Right cardiac atrium (tissue), 5 donors: ENCODE measurements at regions of chr5 and their contacts with region 1.

Region 1: DNA sequence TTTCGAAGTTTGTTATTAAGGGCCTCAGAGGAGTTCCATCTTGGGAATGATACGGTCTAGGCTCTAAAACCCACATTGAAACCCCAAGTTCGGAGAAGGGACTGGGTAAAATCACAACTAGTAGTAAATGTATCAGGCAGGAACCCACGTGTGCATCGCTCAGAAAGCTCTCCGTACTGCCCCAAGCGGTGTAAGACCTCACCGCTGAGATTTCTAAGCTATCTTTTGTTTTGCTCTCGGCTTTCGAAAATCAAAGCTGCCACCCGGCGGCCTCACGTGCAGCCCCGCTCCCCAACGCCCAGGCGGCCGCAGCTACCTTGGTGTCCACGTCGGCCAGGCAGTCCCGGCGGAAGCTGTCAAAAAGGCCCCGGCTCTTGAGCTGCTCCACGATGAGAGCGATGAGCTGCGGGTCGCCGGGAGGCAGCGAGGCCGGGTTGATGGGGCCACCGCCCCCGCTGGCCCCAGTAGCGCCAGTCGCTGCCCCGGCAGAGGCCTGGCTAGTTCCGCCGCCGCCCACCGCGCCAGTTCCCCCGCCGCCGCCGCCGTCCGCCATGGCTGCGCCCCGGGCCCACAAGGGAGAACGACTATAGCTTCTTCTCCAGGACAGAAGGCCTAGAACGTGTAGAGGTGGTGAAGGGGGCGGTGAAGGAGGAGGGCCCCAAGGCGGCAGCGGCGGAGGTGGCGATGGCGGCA is 420 bp downstream of the BOD1 start:
- DNase-seq: peak; percentile 59 to 81 (median 78)
- ATAC-seq: peak; percentile 68 to 71
- H3K4me3 ChIP-seq: peak overlapping the region; percentile 92
- H3K27ac ChIP-seq: peak overlapping the region; percentile 96
- H3K4me1 ChIP-seq: peaks cover 13% of the 10 kb centered on the region
- H3K27me3 ChIP-seq: no peaks in the 10 kb centered on the region

Region 2: GRCh38 chr5:173829817-173830216 is 213.8 kb after region 1 on chr5:
- intact Hi-C with region 1: no loop called
- DNase-seq: no peak
- ATAC-seq: no peak
- H3K4me3 ChIP-seq: no peak overlapping the region
- H3K27ac ChIP-seq: no peak overlapping the region
- H3K4me1 ChIP-seq: peaks cover 2% of the 10 kb centered on the region
- H3K27me3 ChIP-seq: no peaks in the 10 kb centered on the region

Region 3: GRCh38 chr5:173972925-173973615 is 357.0 kb after region 1 on chr5:
- intact Hi-C with region 1: loop called (anchors 1 to 2 kb)
- DNase-seq: peak; percentile 83 to 91 (median 87)
- ATAC-seq: peak; percentile 83 to 85
- H3K4me3 ChIP-seq: peak overlapping the region; percentile 23
- H3K27ac ChIP-seq: peak overlapping the region; percentile 38
- H3K4me1 ChIP-seq: peaks cover 6% of the 10 kb centered on the region
- H3K27me3 ChIP-seq: no peaks in the 10 kb centered on the region